Tibial artery (tissue), 4 donors: ENCODE measurements at regions of chr10 and their contacts with region 1.

Region 1: DNA sequence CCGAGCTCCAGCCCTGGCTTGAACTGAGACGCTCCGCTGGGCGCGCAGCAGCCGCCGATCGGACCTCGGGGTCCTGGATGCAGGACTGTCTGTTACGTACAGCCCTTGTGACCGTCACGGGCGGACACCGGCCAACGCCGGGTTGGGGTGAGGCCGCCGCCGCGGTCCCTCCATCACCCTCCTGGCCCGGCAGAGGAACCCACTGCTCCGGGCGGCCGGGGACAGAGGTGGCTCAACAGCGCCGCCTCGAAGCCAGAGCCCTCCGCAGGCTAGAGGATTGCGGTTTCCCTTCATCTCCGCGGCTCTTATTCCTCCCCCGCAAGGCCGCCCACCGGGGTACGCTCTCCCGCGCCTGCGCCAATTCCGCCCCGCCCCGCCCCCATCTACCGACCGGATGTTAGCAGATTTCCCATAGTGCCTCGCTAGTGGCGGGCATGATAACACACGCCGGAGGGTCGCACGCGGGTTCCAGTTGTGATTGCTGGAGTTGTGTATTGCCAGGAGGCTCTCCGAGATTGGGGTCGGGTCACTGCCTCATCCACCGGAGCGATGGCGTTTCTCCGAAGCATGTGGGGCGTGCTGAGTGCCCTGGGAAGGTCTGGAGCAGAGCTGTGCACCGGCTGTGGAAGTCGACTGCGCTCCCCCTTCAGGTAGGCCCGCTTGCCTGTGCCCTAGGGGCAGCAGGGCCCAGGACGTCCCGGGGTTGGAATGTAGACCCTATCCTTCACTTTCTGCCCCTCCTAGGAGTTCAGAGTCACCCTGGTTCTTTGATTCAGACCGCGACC is at the start of gene TFAM:
- DNase-seq: peak; percentile 95 to 97
- H3K4me3 ChIP-seq: peak within 1 kb of the TSS; percentile 88 to 92
- H3K27ac ChIP-seq: peak within 1 kb of the TSS; percentile 93 to 96
- H3K4me1 ChIP-seq: peaks cover 0 to 28% (median 17%) of the 10 kb centered on the region in 4 donors
- H3K27me3 ChIP-seq: no peaks in the 10 kb centered on the region
- CTCF ChIP-seq: peak; percentile 5 to 34

Region 2: DNA sequence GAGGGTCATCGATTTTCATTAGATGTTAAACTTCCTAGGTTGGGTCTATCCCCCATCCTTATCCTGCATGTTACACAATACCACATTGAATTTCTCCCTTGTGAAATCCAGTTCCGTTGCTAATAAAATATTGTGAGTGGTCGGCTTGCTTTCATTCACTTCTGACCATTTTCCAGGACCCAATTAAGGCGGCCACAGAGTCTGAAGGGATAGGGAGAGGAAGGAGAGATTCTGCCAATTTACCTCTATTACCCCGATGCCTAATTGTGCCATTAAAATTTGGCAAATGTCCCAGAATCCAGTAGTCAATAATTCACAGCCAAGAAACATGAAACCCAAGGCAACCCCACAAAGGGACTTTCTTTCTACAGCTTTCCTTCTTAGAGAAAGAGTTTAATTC is 247.4 kb before region 1 on chr10:
- intact Hi-C with region 1: no loop called
- DNase-seq: no peak
- H3K4me3 ChIP-seq: no peak overlapping the region
- H3K27ac ChIP-seq: no peak overlapping the region
- H3K4me1 ChIP-seq: no peaks in the 10 kb centered on the region
- H3K27me3 ChIP-seq: no peaks in the 10 kb centered on the region
- CTCF ChIP-seq: no peak

Region 3: DNA sequence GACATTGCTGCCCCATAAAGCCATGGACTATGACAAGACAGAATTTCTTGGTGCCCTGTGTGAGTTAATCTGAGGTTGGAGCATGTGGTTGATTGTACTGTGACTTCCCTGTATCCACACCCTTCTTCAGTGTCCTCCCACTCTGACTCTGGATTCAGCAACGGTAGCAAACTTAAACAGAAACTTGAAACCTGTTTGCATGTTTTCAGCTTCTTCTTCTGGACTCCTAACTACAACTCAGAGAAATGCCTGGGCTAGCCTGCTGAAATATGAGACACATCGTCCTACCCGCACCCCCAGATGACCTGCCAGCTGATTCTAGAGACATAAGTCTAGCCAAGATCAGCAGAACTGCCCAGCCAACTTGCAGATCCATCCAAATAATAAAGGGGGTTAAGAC is 195.9 kb before region 1 on chr10:
- intact Hi-C with region 1: loop called (anchors 5 kb)
- DNase-seq: peak in 1 of 2 donors; percentile 29
- H3K4me3 ChIP-seq: no peak overlapping the region
- H3K27ac ChIP-seq: no peak overlapping the region
- H3K4me1 ChIP-seq: peaks cover 0 to 12% (median 3%) of the 10 kb centered on the region in 4 donors
- H3K27me3 ChIP-seq: no peaks in the 10 kb centered on the region
- CTCF ChIP-seq: no peak

Region 4: DNA sequence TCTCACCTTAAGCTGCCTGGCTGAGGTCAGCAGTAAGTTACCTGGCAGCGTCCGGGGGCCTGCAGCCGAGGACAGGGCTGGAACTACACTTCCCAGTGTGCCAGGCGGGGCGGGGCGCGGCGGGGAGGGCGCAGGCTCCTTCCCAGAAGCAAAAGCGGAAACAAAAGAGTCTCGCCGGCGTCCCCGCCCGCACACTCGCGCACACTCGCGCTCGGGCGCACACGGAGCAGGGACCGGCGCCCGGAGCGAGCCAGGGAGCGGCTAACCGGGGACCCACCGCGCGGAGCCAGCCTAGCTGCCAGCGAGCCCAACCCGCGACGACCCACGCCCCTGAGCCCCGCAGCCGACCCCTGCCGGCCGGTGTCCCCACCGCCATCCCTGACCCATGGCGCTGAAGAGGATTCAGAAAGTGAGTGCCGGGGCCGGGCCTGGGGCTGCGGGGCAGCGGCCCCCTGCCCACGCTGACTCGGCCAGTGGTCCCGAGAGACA is 50.3 kb before region 1 on chr10 and contains the start of gene UBE2D1:
- intact Hi-C with region 1: loop called (anchors 5 kb)
- DNase-seq: peak; percentile 82 to 92
- H3K4me3 ChIP-seq: peak within 1 kb of the TSS; percentile 96 to 99
- H3K27ac ChIP-seq: peak within 1 kb of the TSS; percentile 87 to 91
- H3K4me1 ChIP-seq: peaks cover 0 to 29% (median 14%) of the 10 kb centered on the region in 4 donors
- H3K27me3 ChIP-seq: no peaks in the 10 kb centered on the region
- CTCF ChIP-seq: peak; percentile 27 to 28

Region 5: DNA sequence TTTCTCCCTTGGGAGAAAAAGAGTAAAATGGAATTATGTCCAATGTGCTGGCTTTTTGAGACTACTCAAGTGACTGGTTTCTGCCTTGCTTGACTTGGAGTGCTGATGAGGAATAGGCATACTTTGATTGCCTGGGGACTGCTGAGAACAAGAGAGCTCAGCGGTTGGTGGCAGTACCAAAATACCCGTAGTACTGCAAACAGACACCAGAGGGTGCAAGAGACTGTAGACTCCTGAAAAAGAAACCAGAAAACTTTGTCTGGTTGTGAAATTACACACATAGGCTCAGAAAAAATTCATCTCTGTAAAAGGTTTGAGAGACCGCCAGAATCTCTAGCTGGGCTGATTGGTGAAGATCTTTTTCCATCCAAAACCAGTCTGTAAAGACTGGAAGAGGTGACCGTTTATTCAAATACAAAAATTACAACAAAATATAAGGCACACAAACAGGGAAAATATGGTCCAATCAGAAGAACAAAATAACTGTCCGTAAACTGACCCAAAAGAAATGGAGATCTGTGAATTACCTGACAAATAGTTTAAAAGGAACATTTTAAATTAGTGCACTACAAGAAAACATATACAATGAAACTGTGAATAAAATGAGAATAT is 146.0 kb after region 1 on chr10:
- intact Hi-C with region 1: no loop called
- DNase-seq: peak in 1 of 2 donors; percentile 55
- H3K4me3 ChIP-seq: no peak overlapping the region
- H3K27ac ChIP-seq: no peak overlapping the region
- H3K4me1 ChIP-seq: peaks cover 0 to 12% (median 0%) of the 10 kb centered on the region in 4 donors
- H3K27me3 ChIP-seq: no peaks in the 10 kb centered on the region
- CTCF ChIP-seq: peak; percentile 61 to 74

Region 6: DNA sequence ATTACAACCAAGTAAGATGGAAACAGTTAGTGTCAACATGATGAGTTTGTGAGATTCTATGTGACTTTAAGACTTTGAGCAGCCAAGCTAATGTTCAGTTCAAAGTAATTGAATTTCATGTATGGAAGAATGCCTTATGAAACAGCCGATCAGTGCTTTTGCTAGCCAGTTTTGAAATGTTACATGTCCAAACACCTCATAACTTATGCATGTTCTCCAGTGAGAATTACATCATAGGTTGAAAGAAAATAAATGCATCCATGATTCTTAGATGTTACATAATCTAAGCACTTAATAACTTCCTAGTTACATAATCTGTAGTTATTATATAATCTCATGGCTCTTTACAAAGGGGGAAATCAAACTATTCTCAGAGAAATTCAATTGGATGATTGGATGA is 338.8 kb after region 1 on chr10:
- intact Hi-C with region 1: no loop called
- DNase-seq: no peak
- H3K4me3 ChIP-seq: no peak overlapping the region
- H3K27ac ChIP-seq: no peak overlapping the region
- H3K4me1 ChIP-seq: peaks cover 0 to 26% (median 9%) of the 10 kb centered on the region in 4 donors
- H3K27me3 ChIP-seq: no peaks in the 10 kb centered on the region
- CTCF ChIP-seq: no peak

Region 7: DNA sequence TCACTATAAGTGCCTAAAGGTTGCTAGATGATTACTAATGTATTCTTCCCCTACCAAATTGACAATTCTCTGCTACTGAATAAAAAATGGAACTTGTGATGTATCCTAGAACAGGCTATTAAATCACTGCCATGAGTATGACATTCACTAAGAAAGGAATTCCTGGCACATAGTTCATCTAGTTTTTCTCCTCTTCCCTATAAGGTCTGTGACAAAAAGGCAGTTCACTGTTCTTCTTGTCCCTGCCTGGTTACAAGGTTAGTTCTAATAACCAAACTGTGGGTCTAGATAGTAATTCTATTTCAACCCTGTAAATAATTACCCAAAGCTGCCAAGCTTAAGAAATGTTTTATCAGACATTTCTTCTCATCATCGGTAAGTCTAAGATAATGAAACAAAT is 373.1 kb after region 1 on chr10:
- intact Hi-C with region 1: no loop called
- DNase-seq: no peak
- H3K4me3 ChIP-seq: no peak overlapping the region
- H3K27ac ChIP-seq: no peak overlapping the region
- H3K4me1 ChIP-seq: peaks cover 0 to 56% (median 19%) of the 10 kb centered on the region in 4 donors
- H3K27me3 ChIP-seq: no peaks in the 10 kb centered on the region
- CTCF ChIP-seq: no peak